Activated CD4-positive, alpha-beta T cell treated with anti-CD3 and anti-CD28 coated beads for 36 hours (primary cell): ENCODE measurements at regions of chr6 and their contacts with region 1.

Region 1: DNA sequence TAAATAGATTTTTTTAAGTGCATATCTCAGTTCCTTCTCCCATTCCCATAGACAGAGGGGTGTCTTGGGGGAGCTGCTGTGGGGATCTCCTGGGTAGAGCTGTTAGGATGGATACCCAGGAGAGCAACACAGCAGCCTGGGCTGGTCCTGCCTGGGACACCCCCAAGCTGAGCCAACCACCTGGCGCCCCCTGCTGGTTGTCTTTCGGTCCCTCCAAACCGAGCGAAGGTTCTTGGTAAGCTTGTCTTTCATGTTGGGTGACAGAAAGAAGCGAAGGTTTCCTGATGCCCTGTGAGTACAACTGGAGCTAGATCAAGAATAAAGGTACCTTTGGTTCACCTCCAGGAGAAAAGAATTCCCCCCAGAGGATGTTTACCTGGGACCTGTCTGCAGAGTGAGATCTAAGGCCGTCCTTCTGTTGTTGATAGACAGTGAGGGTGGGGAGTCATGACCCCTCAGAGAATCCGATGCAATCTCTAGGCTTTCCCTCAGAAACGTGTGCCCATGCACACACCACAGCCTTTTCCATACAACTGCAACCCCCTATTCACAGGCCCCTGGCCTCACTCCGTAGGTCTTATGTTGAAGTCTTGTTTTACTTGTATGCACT is 50.8 kb downstream of the SNX9 start:
- DNase-seq: peak; percentile 94
- ATAC-seq: peak; percentile 87
- H3K4me3 Mint-ChIP-seq: no peak overlapping the region
- H3K27ac Mint-ChIP-seq: no peak overlapping the region
- H3K4me1 Mint-ChIP-seq: peaks cover 38% of the 10 kb centered on the region
- H3K27me3 Mint-ChIP-seq: no peaks in the 10 kb centered on the region

Region 2: GRCh38 chr6:157428427-157429202 is 445.2 kb before region 1 on chr6:
- CTCF ChIA-PET with region 1: no interaction called
- POLR2A ChIA-PET with region 1: no interaction called
- intact Hi-C with region 1: no loop called
- DNase-seq: peak; percentile 88
- ATAC-seq: peak; percentile 89
- H3K4me3 Mint-ChIP-seq: peak overlapping the region; percentile 51
- H3K27ac Mint-ChIP-seq: peak overlapping the region; percentile 91
- H3K4me1 Mint-ChIP-seq: peaks cover 46% of the 10 kb centered on the region
- H3K27me3 Mint-ChIP-seq: no peaks in the 10 kb centered on the region

Region 3: DNA sequence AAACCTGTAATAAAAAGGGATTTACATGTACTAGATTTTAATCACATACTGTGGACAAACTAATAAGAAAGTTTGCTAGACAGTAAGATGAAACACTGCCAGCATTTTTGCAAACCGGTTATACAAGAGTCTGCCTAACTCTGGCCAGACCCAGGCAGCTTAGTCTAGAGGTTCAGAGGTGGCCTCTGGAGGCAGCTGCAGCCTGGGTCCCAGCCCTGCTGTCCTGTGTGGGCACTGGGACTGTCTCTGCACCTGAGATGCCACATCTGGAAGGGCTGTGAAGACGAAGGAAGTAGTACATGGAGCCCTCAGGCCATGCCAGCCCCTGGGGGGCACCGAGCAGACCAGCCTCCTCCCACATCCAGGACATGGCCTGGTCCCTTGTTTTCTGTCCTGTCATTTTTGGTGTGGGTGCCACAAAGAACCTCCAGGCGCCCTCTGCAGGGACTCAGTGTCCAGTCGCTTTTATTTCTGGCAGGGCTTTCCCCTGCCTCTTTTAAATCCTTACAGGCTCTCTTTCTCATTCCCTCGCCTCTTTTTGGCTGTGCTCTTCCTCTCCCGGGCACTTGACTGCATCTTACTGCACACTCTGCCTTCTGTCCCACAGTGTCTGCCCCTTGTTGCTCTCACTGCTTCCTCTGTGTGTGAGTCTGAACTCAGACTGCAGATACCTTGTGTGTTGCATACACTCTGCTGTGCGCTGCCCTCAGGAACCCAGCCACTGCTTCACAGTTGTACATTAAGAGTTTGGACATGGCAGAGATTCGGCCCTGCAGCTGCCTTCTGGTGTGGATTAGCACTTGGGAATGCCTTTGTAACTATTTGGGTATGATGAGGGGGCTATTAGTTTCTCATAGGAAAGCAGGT is 276.2 kb before region 1 on chr6:
- CTCF ChIA-PET with region 1: no interaction called
- POLR2A ChIA-PET with region 1: no interaction called
- intact Hi-C with region 1: no loop called
- DNase-seq: peak; percentile 66
- ATAC-seq: peak; percentile 44
- H3K4me3 Mint-ChIP-seq: no peak overlapping the region
- H3K27ac Mint-ChIP-seq: no peak overlapping the region
- H3K4me1 Mint-ChIP-seq: no peaks in the 10 kb centered on the region
- H3K27me3 Mint-ChIP-seq: no peaks in the 10 kb centered on the region

Region 4: DNA sequence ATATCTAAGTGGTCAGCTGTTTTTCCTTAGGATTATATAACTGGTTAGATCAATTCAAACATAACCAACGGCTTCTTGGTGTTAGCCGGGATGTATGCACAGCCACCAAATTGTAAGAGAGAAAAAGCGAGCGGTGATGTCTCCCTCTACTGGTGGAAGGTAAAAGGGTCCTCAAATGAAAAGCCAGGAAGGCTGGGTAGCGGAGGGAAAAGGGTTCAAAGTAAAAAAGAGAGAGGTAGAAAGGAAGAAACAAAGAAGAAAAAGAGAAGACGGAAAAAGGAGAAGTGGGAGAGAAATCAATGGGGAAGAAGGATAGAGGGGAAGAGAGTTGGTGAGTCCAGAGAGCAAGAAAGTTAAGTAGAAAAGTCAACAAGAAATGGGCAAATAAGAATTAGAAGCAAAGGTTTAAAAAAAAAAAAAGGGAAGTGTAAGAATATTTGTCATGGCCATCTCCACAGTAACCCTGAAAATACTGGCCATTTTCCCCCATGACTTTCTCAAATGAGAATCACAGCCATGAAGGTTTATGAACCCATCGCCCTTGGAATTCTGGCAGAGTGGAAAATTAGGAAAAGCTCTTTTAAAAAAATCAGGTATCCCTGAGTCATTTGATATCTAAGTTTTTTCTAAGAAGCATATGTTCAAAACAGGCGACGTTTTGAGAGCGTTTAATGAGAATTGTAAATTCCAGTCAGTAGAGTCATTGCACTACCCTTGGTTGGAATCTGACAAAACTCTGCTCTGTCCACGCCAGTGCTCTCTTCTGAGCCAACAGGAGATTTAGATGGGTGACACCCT is 206.4 kb before region 1 on chr6:
- CTCF ChIA-PET with region 1: interaction called, 12 read pairs
- POLR2A ChIA-PET with region 1: no interaction called
- intact Hi-C with region 1: loop called (anchors 2 to 10 kb)
- DNase-seq: peak; percentile 73
- ATAC-seq: peak; percentile 48
- H3K4me3 Mint-ChIP-seq: no peak overlapping the region
- H3K27ac Mint-ChIP-seq: no peak overlapping the region
- H3K4me1 Mint-ChIP-seq: peaks cover 31% of the 10 kb centered on the region
- H3K27me3 Mint-ChIP-seq: peaks cover 5% of the 10 kb centered on the region

Region 5: DNA sequence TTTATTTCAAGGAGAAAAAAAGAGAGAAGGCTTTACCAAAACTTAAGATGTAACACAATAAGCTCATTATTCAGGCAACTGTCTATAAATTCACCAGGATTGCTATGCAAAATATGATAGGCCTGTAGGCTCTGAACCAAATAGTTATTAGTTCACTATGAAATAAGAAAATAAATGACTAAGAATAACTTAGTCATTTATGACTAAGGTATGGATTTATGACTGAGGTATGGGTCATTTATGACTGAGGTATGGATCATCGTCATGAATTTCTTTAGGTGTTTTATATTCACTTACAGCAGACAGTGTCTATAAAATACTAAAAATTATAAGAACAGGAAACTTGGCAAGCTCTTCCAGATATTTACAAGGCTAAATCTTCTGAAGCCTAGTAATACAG is 102.9 kb before region 1 on chr6:
- CTCF ChIA-PET with region 1: interaction called, 12 read pairs
- POLR2A ChIA-PET with region 1: no interaction called
- intact Hi-C with region 1: no loop called
- DNase-seq: no peak
- ATAC-seq: peak; percentile 65
- H3K4me3 Mint-ChIP-seq: no peak overlapping the region
- H3K27ac Mint-ChIP-seq: no peak overlapping the region
- H3K4me1 Mint-ChIP-seq: peaks cover 57% of the 10 kb centered on the region
- H3K27me3 Mint-ChIP-seq: peaks cover 7% of the 10 kb centered on the region

Region 6: GRCh38 chr6:157823001-157823527 is 50.8 kb before region 1 on chr6 and contains the start of gene SNX9:
- CTCF ChIA-PET with region 1: interaction called, 14 read pairs
- POLR2A ChIA-PET with region 1: no interaction called
- intact Hi-C with region 1: loop called in 1 of 2 experiments (anchors 2 kb)
- DNase-seq: peak; percentile 84
- ATAC-seq: peak; percentile 59
- H3K4me3 Mint-ChIP-seq: peak within 1 kb of the TSS; percentile 92
- H3K27ac Mint-ChIP-seq: peak within 1 kb of the TSS; percentile 99
- H3K4me1 Mint-ChIP-seq: peaks cover 48% of the 10 kb centered on the region
- H3K27me3 Mint-ChIP-seq: peaks cover 11% of the 10 kb centered on the region
- total RNA-seq, gene SNX9: 39.4 to 43.3 TPM

Region 7: DNA sequence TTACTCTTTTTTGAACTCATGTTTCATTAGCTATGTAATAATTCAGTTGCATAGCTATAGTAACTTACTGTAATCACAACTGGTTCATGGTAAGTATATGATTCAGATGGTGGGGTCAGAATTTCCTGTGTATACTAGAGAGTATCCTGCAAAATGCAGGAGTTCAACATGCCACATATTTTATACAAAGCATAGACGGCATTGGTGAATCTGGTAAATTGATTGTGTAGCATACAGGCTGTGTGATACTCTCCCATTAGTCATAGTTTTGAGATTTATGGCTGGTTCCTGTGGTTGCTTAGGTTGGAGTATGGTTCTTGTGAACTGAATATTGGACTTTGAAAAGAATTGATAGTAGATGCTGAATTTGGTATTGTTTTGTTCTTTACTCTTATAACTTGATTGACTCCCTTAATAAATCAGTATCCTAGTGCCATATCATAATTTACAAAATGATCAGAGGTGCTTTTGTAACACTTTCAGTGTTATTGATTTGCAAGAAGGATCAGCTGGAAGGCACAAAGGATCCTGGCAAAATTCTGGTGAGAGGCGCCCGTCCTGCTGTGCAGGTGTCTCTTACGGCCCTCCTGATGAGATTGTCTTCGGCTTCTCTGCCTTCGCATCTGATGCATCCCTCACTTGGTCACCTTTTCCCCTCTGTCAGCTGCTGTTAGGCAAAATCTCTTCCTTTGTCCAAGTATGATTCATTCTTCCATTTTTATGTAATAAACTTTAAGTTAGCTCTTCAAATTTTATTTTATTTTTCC is 28.2 kb before region 1 on chr6:
- CTCF ChIA-PET with region 1: interaction called, 14 read pairs
- POLR2A ChIA-PET with region 1: interaction called, 3 read pairs
- intact Hi-C with region 1: no loop called
- DNase-seq: no peak
- ATAC-seq: peak; percentile 72
- H3K4me3 Mint-ChIP-seq: no peak overlapping the region
- H3K27ac Mint-ChIP-seq: peak overlapping the region; percentile 72
- H3K4me1 Mint-ChIP-seq: peaks cover 93% of the 10 kb centered on the region
- H3K27me3 Mint-ChIP-seq: no peaks in the 10 kb centered on the region

Region 8: GRCh38 chr6:157885211-157885788 is 11.5 kb after region 1 on chr6:
- CTCF ChIA-PET with region 1: interaction called, 42 read pairs
- POLR2A ChIA-PET with region 1: interaction called, 7 read pairs
- intact Hi-C with region 1: no loop called
- DNase-seq: peak; percentile 78
- ATAC-seq: peak; percentile 89
- H3K4me3 Mint-ChIP-seq: peak overlapping the region; percentile 17
- H3K27ac Mint-ChIP-seq: peak overlapping the region; percentile 92
- H3K4me1 Mint-ChIP-seq: peaks cover 76% of the 10 kb centered on the region
- H3K27me3 Mint-ChIP-seq: no peaks in the 10 kb centered on the region

Region 9: GRCh38 chr6:157954150-157955117 is 80.6 kb after region 1 on chr6:
- CTCF ChIA-PET with region 1: no interaction called
- POLR2A ChIA-PET with region 1: no interaction called
- intact Hi-C with region 1: no loop called
- DNase-seq: no peak
- ATAC-seq: no peak
- H3K4me3 Mint-ChIP-seq: no peak overlapping the region
- H3K27ac Mint-ChIP-seq: no peak overlapping the region
- H3K4me1 Mint-ChIP-seq: no peaks in the 10 kb centered on the region
- H3K27me3 Mint-ChIP-seq: peaks cover 2% of the 10 kb centered on the region